ENCODE measurements at regions of chr20 and their contacts with region 1.

Region 1: GRCh38 chr20:16314320-16314719 is 258.9 kb downstream of the KIF16B start:
- DNase-seq: no peak
- ATAC-seq: no peak
- H3K4me3 Mint-ChIP-seq: no peak overlapping the region
- H3K27ac Mint-ChIP-seq: no peak overlapping the region
- H3K4me1 Mint-ChIP-seq: peaks cover 23% of the 10 kb centered on the region
- H3K27me3 Mint-ChIP-seq: no peaks in the 10 kb centered on the region
- CTCF ChIP-seq: no peak

Region 2: GRCh38 chr20:17315407-17316231 is 1001.3 kb after region 1 on chr20:
- CTCF ChIA-PET with region 1: no interaction called
- POLR2A ChIA-PET with region 1: no interaction called
- intact Hi-C with region 1: loop called (anchors 10 kb)
- DNase-seq: no peak
- ATAC-seq: no peak
- H3K4me3 Mint-ChIP-seq: no peak overlapping the region
- H3K27ac Mint-ChIP-seq: no peak overlapping the region
- H3K4me1 Mint-ChIP-seq: no peaks in the 10 kb centered on the region
- H3K27me3 Mint-ChIP-seq: peaks cover 31% of the 10 kb centered on the region
- CTCF ChIP-seq: no peak